ENCODE measurements at regions of chr15 and their contacts with region 1.

Region 1: GRCh38 chr15:79970624-79971434 is at the start of gene BCL2A1:
- DNase-seq: peak; percentile 93 to 99 (median 98)
- H3K4me3 ChIP-seq: peak within 1 kb of the TSS; percentile 49 to 100 (median 100)
- H3K4me3 Mint-ChIP-seq: peak within 1 kb of the TSS; percentile 94 to 95
- H3K27ac ChIP-seq: peak within 1 kb of the TSS; percentile 64 to 94
- H3K27ac Mint-ChIP-seq: peak within 1 kb of the TSS; percentile 97 to 100 (median 99)
- H3K4me1 ChIP-seq: peaks cover 61 to 70% of the 10 kb centered on the region in 2 donors
- H3K4me1 Mint-ChIP-seq: peaks cover 56% of the 10 kb centered on the region
- H3K27me3 ChIP-seq: no peaks in the 10 kb centered on the region
- H3K27me3 Mint-ChIP-seq: no peaks in the 10 kb centered on the region
- CTCF ChIP-seq: no peak
- polyA plus RNA-seq, gene BCL2A1: 277 to 465 (median 350) TPM

Region 2: GRCh38 chr15:79953951-79954444 is 16.8 kb before region 1 on chr15:
- intact Hi-C with region 1: loop called in 1 of 2 experiments (anchors 2 kb)
- DNase-seq: peak; percentile 84 to 92 (median 87)
- H3K4me3 ChIP-seq: peak overlapping the region in 1 of 3 experiments; percentile 58
- H3K4me3 Mint-ChIP-seq: peak overlapping the region; percentile 53 to 55
- H3K27ac ChIP-seq: peak overlapping the region; percentile 92 to 93
- H3K27ac Mint-ChIP-seq: peak overlapping the region; percentile 95 to 99 (median 98)
- H3K4me1 ChIP-seq: peaks cover 55 to 60% of the 10 kb centered on the region in 2 donors
- H3K4me1 Mint-ChIP-seq: peaks cover 50% of the 10 kb centered on the region
- H3K27me3 ChIP-seq: no peaks in the 10 kb centered on the region
- H3K27me3 Mint-ChIP-seq: peaks cover 0 to 3% (median 0%) of the 10 kb centered on the region in 3 donors
- CTCF ChIP-seq: no peak

Region 3: DNA sequence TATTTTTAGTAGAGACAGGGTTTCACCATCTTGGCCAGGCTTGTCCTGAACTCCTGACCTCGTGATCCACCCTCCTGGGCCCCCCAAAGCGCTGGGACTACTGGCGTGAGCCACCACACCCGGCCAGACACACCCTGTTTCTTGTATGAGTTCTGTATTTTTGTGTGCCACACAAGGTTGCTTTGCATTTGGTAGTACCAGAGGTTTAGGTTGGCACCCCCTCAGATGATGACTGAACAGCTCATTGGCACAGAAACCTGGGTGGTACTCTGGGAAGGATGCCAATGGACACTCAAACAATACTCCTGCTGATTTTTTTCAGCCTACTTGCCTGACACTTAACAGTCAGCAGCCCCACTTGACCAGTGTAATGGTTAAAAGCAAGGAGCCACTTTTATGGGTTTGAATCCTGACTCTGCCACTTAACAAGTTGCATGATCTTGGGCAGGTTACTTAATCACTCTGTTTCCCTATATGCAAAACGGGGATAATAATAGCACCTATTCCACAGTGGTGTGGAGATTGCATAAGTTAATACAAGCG is 39.4 kb after region 1 on chr15:
- intact Hi-C with region 1: no loop called
- DNase-seq: no peak
- H3K4me3 ChIP-seq: no peak overlapping the region
- H3K4me3 Mint-ChIP-seq: peak overlapping the region in 1 of 2 donors; percentile 23
- H3K27ac ChIP-seq: peak overlapping the region in 1 of 2 donors; percentile 32
- H3K27ac Mint-ChIP-seq: peak overlapping the region in 5 of 7 donors; percentile 31 to 89 (median 63)
- H3K4me1 ChIP-seq: peaks cover 13 to 21% of the 10 kb centered on the region in 2 donors
- H3K4me1 Mint-ChIP-seq: peaks cover 17% of the 10 kb centered on the region
- H3K27me3 ChIP-seq: no peaks in the 10 kb centered on the region
- H3K27me3 Mint-ChIP-seq: peaks cover 0 to 3% (median 0%) of the 10 kb centered on the region in 3 donors
- CTCF ChIP-seq: no peak

Region 4: DNA sequence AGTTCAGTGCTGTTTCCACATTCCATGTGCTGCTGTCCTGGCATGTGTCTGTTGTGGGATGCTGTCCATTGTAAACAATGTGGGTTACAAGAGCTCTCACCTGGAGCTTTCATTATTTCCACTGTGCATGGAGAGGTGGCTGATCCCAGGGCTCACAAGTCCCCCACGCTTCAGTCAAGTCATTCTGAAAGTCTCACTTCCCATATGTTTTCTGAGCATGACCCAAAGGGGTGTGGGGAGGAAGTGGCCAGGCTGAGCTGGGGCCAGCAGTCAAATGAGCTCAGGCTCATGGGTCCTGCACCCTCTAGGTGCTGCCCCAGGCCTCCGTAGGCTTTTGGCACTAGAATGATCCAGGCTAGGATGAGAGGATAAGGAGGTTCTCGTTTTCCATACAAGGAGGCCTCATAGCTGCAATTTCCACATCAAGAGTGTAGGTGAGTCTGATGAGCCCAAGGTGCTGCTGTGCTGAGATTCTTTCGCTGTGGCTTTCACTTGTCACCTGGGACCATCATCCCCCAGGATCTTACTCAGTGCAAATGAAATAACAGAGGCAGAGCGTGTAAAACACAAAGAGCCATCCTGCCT is 1331.1 kb after region 1 on chr15:
- intact Hi-C with region 1: loop called in 1 of 2 experiments (anchors 10 kb)
- DNase-seq: peak; percentile 86 to 92 (median 86)
- H3K4me3 ChIP-seq: peak overlapping the region; percentile 1 to 91 (median 19)
- H3K4me3 Mint-ChIP-seq: peak overlapping the region; percentile 65 to 84
- H3K27ac ChIP-seq: peak overlapping the region; percentile 94 to 95
- H3K27ac Mint-ChIP-seq: peak overlapping the region; percentile 97 to 99 (median 99)
- H3K4me1 ChIP-seq: peaks cover 82 to 88% of the 10 kb centered on the region in 2 donors
- H3K4me1 Mint-ChIP-seq: peaks cover 86% of the 10 kb centered on the region
- H3K27me3 ChIP-seq: no peaks in the 10 kb centered on the region
- H3K27me3 Mint-ChIP-seq: peaks cover 0 to 2% (median 0%) of the 10 kb centered on the region in 3 donors
- CTCF ChIP-seq: no peak

Measured in CD14-positive monocyte (primary cell).